B cell (primary cell): ENCODE measurements at regions of chr19 and their contacts with region 1.

Region 1: DNA sequence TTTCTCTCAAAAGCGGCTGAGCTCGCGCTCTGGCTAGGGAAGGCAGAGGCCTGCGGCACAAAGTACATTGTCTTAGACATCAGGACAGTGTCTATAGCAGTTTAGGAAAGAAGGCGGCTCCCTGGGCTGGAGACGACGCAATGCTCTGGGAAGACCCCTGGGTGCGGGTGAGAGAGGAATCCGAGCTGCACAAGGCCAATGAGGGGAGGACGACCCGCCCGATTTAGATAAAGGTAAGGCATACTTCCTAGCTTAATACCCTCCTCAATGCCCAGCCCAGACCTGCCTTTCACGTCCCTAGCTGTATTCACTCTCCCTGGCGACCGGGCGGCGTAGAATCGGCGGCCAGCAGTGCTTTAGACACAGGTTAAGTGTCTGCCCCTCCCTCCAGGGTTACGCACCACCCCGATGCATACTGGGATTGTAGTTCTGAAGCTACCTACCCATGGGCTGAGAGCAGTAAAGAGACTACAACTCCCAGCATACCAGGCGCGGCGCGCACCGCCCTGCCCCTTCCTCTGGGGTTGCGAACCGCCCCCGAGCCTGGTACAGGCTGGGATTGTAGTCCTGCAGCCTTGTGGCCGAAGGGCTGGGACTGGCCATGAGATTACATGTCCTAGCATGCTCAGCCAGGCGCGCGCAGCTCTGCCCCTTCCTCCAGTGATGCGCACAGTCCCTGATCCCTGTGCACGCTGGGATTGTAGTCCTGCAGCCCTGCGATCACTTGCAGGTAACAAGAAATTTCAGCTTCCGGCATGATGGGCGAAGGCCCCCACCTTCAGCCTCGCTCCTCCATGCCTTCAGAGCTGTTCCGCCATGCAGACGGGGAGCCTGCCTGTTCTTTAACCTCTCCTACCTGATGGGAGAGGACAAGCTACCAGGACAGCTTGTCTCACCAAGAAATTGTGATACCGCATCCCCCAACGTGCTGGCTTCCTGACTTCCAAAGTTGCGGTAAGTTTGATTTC is 43.4 kb upstream of the ZNF14 start:
- DNase-seq: peak; percentile 94
- ATAC-seq: peak; percentile 99
- H3K4me3 ChIP-seq: peak overlapping the region; percentile 71 to 94 (median 90)
- H3K4me3 Mint-ChIP-seq: peak overlapping the region; percentile 97
- H3K27ac ChIP-seq: peak overlapping the region; percentile 8 to 78
- H3K27ac Mint-ChIP-seq: peak overlapping the region; percentile 91
- H3K4me1 ChIP-seq: peaks cover 17 to 24% of the 10 kb centered on the region in 2 donors
- H3K4me1 Mint-ChIP-seq: peaks cover 35% of the 10 kb centered on the region
- H3K27me3 ChIP-seq: no peaks in the 10 kb centered on the region
- H3K27me3 Mint-ChIP-seq: no peaks in the 10 kb centered on the region
- CTCF ChIP-seq: no peak

Region 2: GRCh38 chr19:19515764-19516519 is 260.4 kb before region 1 on chr19 and contains the start of gene NDUFA13:
- CTCF ChIA-PET with region 1: no interaction called
- POLR2A ChIA-PET with region 1: no interaction called
- intact Hi-C with region 1: loop called (anchors 1 kb)
- DNase-seq: peak; percentile 96
- ATAC-seq: peak; percentile 94
- H3K4me3 ChIP-seq: peak within 1 kb of the TSS; percentile 82 to 99 (median 95)
- H3K4me3 Mint-ChIP-seq: peak within 1 kb of the TSS; percentile 93
- H3K27ac ChIP-seq: peak within 1 kb of the TSS; percentile 72 to 81
- H3K27ac Mint-ChIP-seq: peak within 1 kb of the TSS; percentile 92
- H3K4me1 ChIP-seq: peaks cover 12 to 23% of the 10 kb centered on the region in 2 donors
- H3K4me1 Mint-ChIP-seq: peaks cover 27% of the 10 kb centered on the region
- H3K27me3 ChIP-seq: no peaks in the 10 kb centered on the region
- H3K27me3 Mint-ChIP-seq: no peaks in the 10 kb centered on the region
- CTCF ChIP-seq: no peak
- total RNA-seq, gene NDUFA13: 170 and 188 TPM in 2 replicates

Region 3: DNA sequence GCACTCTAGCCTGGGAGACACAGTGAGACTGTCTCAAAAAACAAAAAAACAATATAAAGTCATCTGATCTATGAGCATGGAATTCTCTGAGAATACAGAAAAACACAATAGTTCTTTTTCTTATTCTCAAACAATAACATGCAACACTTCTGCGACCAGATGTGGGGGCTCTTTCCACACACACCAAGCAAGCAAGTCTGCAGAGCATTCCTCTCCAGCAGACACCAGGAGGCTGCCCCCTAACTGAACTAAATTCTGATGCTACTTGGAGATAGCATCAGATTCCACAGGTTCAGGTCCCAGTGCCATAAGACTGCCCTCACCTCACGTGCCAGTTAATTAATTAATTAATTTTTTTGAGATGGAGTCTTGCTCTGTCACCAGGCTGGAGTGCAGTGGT is 79.9 kb before region 1 on chr19:
- CTCF ChIA-PET with region 1: no interaction called
- POLR2A ChIA-PET with region 1: no interaction called
- intact Hi-C with region 1: no loop called
- DNase-seq: no peak
- ATAC-seq: no peak
- H3K4me3 ChIP-seq: no peak overlapping the region
- H3K4me3 Mint-ChIP-seq: no peak overlapping the region
- H3K27ac ChIP-seq: no peak overlapping the region
- H3K27ac Mint-ChIP-seq: no peak overlapping the region
- H3K4me1 ChIP-seq: no peaks in the 10 kb centered on the region
- H3K4me1 Mint-ChIP-seq: no peaks in the 10 kb centered on the region
- H3K27me3 ChIP-seq: no peaks in the 10 kb centered on the region
- H3K27me3 Mint-ChIP-seq: no peaks in the 10 kb centered on the region
- CTCF ChIP-seq: no peak

Region 4: DNA sequence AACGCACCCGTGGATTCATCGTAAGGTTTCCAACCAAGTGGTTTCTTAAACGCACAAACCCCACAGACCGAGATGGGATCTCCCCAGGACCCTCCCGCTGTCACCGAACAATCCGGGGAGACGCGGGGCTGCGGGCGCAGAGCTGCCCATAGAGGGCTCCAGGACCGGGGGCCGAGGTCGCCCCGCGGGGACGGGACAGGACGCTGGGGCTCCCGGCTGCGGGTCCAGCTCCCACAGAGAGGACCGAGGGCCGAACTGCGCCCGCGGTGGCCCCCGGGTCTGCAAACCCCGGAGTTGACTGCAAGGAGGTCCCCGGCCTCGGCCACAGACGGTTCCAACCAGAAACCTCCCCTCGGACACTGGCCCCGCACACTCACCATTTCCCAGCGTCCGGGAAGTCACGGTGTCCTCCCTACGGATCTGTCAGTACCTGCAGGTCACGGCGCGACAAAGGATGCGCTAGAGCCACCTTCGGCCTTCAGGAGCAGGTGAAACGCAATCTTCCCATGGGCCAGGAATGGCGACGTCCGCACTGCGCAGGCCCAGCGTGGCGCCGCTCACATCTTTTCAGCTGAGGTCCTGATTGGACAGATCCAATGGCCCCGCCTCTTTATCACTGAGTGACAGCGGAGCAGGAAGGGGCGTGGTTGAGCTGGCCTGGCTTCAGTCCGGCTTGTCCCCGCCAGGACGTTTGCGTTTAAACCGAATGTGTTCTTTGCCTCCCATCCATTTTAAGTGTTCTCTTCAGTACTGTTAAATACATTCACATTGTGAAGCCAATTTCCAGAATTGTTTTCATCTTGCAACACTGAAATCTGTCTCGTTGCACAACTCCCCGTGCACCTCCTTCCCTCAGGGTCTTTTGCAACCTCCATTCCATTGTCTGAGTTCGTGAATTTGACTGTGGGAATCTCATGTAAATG is 43.5 kb before region 1 on chr19 and contains the start of gene ZNF14:
- CTCF ChIA-PET with region 1: interaction called, 5 read pairs
- POLR2A ChIA-PET with region 1: interaction called, 3 read pairs
- intact Hi-C with region 1: loop called (anchors 1 kb)
- DNase-seq: peak; percentile 94
- ATAC-seq: peak; percentile 100
- H3K4me3 ChIP-seq: peak within 1 kb of the TSS; percentile 59 to 95 (median 94)
- H3K4me3 Mint-ChIP-seq: peak within 1 kb of the TSS; percentile 99
- H3K27ac ChIP-seq: peak within 1 kb of the TSS; percentile 49 to 76
- H3K27ac Mint-ChIP-seq: peak within 1 kb of the TSS; percentile 96
- H3K4me1 ChIP-seq: peaks cover 11 to 17% of the 10 kb centered on the region in 2 donors
- H3K4me1 Mint-ChIP-seq: peaks cover 27% of the 10 kb centered on the region
- H3K27me3 ChIP-seq: no peaks in the 10 kb centered on the region
- H3K27me3 Mint-ChIP-seq: no peaks in the 10 kb centered on the region
- CTCF ChIP-seq: no peak
- total RNA-seq, gene ZNF14: 21.0 and 22.5 TPM in 2 replicates

Region 5: GRCh38 chr19:19749117-19749897 is 27.0 kb before region 1 on chr19:
- CTCF ChIA-PET with region 1: no interaction called
- POLR2A ChIA-PET with region 1: no interaction called
- intact Hi-C with region 1: no loop called
- DNase-seq: no peak
- ATAC-seq: no peak
- H3K4me3 ChIP-seq: no peak overlapping the region
- H3K4me3 Mint-ChIP-seq: no peak overlapping the region
- H3K27ac ChIP-seq: no peak overlapping the region
- H3K27ac Mint-ChIP-seq: no peak overlapping the region
- H3K4me1 ChIP-seq: peaks cover 0 to 3% of the 10 kb centered on the region in 2 donors
- H3K4me1 Mint-ChIP-seq: no peaks in the 10 kb centered on the region
- H3K27me3 ChIP-seq: no peaks in the 10 kb centered on the region
- H3K27me3 Mint-ChIP-seq: no peaks in the 10 kb centered on the region
- CTCF ChIP-seq: no peak

Region 6: DNA sequence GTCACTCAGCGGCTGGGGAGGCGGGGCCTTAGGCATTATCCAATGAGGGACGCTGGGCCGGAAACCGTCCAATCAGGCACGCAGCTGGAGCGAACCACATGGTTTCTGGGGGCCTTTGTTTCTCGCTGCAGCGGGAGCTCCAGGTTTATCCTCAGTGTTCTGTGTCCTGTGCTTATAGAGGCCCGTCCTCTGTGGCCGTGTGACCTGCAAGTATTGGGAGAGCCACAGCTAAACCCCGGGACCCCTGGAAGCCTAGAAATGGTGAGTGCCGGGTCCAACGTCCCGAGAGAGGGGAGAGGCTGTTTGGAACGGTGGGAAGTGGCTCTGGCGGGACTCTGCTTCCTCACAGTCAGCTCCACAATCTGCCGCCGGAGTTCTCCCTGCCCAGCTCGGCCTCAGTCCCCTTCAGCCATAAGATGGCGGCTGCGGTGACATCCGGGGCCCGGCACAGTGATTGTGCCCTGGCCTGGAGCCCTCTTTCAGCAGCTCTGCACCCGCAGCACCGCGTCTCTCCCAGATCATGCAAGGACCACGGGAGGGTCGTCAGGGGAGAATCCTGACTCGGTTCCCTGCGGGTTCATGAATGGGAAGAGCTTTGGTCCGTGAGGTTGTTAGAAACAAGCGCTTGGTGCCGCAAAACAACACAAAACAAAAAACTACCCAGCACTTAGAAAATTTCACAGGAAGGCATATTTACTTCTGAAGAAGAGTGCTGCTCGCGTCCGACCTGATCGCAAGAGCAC is 89.6 kb after region 1 on chr19 and contains the start of gene ZNF253:
- CTCF ChIA-PET with region 1: no interaction called
- POLR2A ChIA-PET with region 1: interaction called, 23 read pairs
- intact Hi-C with region 1: loop called (anchors 1 kb)
- DNase-seq: peak; percentile 94
- ATAC-seq: peak; percentile 87
- H3K4me3 ChIP-seq: peak within 1 kb of the TSS; percentile 78 to 97 (median 93)
- H3K4me3 Mint-ChIP-seq: peak within 1 kb of the TSS; percentile 100
- H3K27ac ChIP-seq: peak within 1 kb of the TSS; percentile 88 to 91
- H3K27ac Mint-ChIP-seq: peak within 1 kb of the TSS; percentile 98
- H3K4me1 ChIP-seq: peaks cover 15 to 19% of the 10 kb centered on the region in 2 donors
- H3K4me1 Mint-ChIP-seq: peaks cover 35% of the 10 kb centered on the region
- H3K27me3 ChIP-seq: no peaks in the 10 kb centered on the region
- H3K27me3 Mint-ChIP-seq: no peaks in the 10 kb centered on the region
- CTCF ChIP-seq: no peak
- total RNA-seq, gene ZNF253: 28.6 and 33.7 TPM in 2 replicates

Region 7: DNA sequence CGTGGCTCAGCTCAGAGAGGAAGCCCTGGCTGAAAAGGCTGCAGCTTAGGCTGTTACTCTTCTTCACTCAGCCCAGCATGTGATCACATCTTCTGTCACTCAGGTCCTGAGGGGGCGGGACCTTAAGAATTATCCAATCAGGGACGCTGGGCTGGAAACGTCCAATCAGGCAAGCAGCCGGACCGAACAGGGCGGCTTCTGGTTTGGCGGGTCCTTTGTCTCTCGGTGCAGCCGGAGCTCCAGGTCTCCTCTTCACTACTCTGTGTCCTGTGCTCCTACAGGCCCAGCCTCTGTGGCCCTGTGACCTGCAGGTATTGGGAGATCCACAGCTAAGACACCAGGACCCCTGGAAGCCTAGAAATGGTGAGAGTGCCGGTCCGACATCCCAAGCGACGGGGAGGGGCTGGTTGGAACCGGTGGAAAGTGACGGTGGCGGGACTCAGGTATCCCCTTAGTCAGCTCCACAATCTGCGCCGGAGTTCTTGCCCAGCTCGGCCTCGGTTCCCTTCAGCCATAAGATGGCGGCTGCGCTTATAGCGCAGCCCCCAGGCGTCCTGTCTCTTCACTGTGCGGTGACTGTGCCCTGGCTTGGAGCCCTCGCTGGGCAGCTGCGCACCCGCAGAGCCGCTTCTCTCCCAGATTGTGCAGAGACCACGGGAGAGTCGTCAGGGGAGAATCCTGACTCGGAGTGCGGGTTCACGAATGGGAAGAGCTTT is 124.6 kb after region 1 on chr19 and contains the start of gene ZNF93:
- CTCF ChIA-PET with region 1: no interaction called
- POLR2A ChIA-PET with region 1: interaction called, 8 read pairs
- intact Hi-C with region 1: loop called (anchors 1 kb)
- DNase-seq: peak; percentile 94
- ATAC-seq: peak; percentile 98
- H3K4me3 ChIP-seq: peak within 1 kb of the TSS; percentile 85 to 94 (median 87)
- H3K4me3 Mint-ChIP-seq: peak within 1 kb of the TSS; percentile 98
- H3K27ac ChIP-seq: peak within 1 kb of the TSS; percentile 71 to 74
- H3K27ac Mint-ChIP-seq: peak within 1 kb of the TSS; percentile 91
- H3K4me1 ChIP-seq: peaks cover 6 to 16% of the 10 kb centered on the region in 2 donors
- H3K4me1 Mint-ChIP-seq: peaks cover 41% of the 10 kb centered on the region
- H3K27me3 ChIP-seq: no peaks in the 10 kb centered on the region
- H3K27me3 Mint-ChIP-seq: no peaks in the 10 kb centered on the region
- CTCF ChIP-seq: no peak
- total RNA-seq, gene ZNF93: 12.5 and 13.3 TPM in 2 replicates